ENCODE measurements at regions of chr5 and their contacts with region 1.

Region 1: DNA sequence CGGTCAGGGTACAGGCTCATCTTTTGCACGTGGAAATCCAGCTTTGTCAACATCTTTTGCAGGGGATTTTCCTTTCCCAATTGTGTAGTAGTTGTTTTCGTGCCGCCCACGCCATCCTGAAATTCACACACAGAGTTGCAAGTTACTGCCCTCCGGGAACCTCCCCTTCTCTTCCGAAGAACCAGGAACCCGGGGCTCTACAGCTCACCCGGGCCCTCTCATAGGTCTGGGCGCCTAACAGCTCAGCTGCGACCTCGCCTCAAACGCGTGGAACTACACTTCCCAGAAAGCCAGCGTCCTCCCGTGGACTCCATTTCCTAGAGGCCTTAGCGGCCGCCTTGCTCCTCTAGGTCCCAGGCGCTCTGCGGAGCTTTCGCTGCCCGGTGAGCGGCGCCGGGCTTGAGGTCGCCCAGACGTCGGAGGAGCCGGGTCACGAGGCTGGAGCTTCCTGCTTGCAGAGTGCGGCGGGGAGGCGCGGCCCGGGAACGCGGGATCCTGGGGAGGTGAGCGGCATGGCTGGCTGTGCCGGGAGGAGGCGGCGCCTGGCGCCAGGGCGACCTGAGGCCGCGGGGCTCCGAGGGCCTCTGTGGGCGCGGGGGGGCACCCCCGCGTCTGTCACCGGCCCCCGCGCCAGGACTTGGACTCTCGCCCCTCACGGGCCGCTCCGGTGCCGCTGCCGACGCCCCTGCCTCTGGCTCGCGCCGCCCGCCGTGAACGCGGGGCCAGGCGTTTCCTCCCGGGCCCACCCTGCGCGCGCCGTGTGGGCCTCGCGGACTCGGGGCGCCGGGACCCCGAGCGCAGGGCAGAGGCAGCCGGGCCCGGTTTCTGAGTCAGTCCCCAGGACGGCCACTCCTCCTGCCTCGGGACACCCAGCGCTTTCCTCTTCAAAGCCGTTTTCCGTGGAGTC is at the start of gene ZNF354B:
- DNase-seq: peak; percentile 84 to 99 (median 90)

Region 2: DNA sequence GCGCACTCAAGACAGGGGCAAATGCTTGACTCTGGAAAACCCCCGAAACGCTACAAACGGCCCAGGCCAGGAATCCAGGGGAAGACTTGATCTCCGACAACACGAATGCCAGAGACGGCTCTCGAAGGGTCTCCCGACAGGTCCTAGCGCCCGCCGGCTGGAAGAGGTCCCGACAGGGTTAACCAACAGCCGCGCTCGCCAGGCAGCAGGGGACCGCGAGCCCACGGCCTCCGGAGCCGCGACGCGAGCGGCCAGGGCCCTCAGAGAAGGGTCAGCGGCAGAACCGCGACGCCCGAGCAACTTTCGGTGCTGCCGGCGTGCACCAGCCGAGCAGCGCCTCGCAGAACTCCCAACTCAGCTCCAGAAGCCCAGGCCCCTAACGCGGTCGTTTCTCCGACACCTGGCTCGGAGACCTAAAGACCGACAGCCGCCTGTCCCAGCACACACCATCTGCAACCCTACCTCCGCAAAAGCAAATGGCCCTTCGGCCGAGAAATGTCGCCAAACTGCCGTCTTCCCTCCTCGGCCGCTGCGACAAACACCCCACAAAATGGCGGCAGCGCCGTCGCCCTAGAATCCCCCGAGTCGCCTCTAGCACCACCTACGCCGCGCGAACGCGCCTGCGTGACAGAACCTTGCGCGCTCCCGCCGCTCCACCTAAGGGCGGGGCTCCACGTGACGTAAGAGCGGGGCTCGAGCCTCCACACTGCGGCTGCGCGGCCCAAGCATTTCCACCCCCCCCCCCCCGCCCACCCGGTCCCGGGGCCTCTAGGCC is 233.2 kb before region 1 on chr5 and contains the start of gene CLK4:
- intact Hi-C with region 1: loop called (anchors 2 kb)
- DNase-seq: peak; percentile 91 to 99 (median 95)

Region 3: DNA sequence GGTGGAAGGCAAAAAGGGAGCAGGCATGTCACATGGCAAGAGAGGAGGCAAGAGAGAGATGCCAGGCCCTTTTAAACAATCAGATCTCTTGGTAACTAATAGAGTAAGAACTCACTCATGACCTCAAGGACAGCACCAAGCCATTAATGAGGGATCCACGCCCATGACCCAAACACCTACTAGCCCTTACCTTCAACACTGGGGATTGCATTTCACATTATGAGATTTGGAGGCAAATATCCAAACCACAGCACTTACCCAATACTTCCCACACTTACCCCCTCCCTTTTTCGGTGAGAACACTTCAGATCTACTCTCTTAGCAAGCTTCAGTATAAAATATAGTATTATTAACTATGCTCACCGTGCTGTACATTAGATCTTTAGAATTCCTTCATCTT is 171.3 kb before region 1 on chr5:
- intact Hi-C with region 1: no loop called
- DNase-seq: no peak

Region 4: DNA sequence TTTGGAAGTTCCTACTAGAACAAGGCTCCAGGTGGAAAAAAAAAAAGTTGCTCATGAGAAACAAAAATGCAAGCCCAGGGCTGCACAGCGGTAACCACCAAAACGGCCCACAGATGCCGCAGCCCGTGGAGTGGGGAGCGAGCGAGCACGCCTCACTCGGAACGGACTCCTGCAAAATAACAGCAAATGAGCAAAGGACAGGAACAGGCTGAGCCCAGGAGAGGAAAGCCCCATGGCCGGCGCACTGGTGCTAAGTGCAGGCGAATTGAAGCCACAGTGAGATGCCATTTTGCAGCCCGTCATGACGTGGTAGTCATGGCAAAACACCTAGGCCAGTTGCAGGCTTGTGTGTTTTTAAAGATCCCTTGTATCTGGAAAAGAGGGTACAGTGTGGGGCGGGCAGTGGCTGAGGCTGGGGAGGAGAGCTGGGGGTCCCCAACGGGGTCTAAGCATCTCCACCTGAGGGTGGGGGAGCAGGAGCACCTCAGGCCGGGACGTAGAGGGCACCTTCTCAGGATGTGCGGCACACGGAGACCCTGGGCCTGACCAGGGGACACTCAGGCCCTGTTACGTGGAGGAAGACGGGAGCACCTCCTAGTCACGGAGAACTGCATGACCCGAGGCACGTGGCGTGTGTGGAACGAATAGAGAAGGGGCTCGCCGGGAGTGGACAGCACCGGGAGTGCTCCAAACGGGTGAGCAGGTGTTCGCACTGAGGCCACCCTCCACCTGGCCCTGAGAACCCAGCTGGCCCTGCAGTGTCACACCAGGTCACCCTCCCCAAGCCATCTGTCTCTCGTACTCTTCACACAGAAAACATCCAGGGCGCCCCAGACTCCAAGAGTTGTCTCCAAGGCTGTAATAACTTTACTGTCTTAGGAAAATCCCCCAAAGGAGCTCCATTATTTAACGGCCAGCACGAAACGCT is 124.5 kb after region 1 on chr5:
- intact Hi-C with region 1: no loop called
- DNase-seq: no peak

Region 5: GRCh38 chr5:179060116-179061008 is 200.5 kb after region 1 on chr5 and contains the start of gene ZNF354C:
- intact Hi-C with region 1: loop called (anchors 1 kb)
- DNase-seq: peak; percentile 78 to 98 (median 87)